PC-9 (cell line): ENCODE measurements at regions of chrX and their contacts with region 1.

Region 1: DNA sequence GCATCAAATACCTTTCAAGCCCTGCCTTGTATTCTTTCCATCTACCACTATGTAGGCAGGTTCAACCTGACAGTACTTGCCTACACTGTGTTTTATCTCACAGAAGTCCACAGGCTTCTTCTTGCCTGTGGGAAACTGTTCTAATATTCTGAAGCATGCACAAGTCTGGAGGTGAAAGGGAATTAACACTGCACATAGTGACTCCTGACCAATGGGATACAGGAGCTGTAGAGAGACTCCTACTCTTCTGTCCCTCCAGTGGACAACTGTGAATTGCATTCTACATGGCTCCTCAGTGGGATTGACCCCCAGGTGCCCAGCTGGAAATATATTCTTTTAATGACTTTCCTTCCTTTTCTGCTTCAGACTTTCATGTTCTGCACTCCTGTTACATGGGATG is 8.3 kb upstream of the YIPF6 start:
- DNase-seq: peak in 1 of 2 experiments; percentile 37
- H3K4me3 ChIP-seq: no peak overlapping the region
- H3K27ac ChIP-seq: no peak overlapping the region
- H3K4me1 ChIP-seq: no peaks in the 10 kb centered on the region
- H3K27me3 ChIP-seq: no peaks in the 10 kb centered on the region
- CTCF ChIP-seq: peak; percentile 61; the same call in 1 of the 2 replicates

Region 2: GRCh38 chrX:68084765-68085164 is 405.8 kb before region 1 on chrX:
- CTCF ChIA-PET with region 1: no interaction called
- POLR2A ChIA-PET with region 1: no interaction called
- intact Hi-C with region 1: no loop called
- DNase-seq: no peak
- H3K4me3 ChIP-seq: no peak overlapping the region
- H3K27ac ChIP-seq: no peak overlapping the region
- H3K4me1 ChIP-seq: no peaks in the 10 kb centered on the region
- H3K27me3 ChIP-seq: no peaks in the 10 kb centered on the region
- CTCF ChIP-seq: no peak

Region 3: GRCh38 chrX:68396961-68397419 is 93.6 kb before region 1 on chrX:
- CTCF ChIA-PET with region 1: no interaction called
- POLR2A ChIA-PET with region 1: no interaction called
- intact Hi-C with region 1: no loop called
- DNase-seq: no peak
- H3K4me3 ChIP-seq: no peak overlapping the region
- H3K27ac ChIP-seq: no peak overlapping the region
- H3K4me1 ChIP-seq: no peaks in the 10 kb centered on the region
- H3K27me3 ChIP-seq: no peaks in the 10 kb centered on the region
- CTCF ChIP-seq: no peak

Region 4: GRCh38 chrX:68853665-68854251 is 363.2 kb after region 1 on chrX:
- CTCF ChIA-PET with region 1: no interaction called
- POLR2A ChIA-PET with region 1: interaction called, 11 read pairs
- intact Hi-C with region 1: no loop called
- DNase-seq: no peak
- H3K4me3 ChIP-seq: no peak overlapping the region
- H3K27ac ChIP-seq: no peak overlapping the region
- H3K4me1 ChIP-seq: no peaks in the 10 kb centered on the region
- H3K27me3 ChIP-seq: no peaks in the 10 kb centered on the region
- CTCF ChIP-seq: no peak